Endothelial cell of umbilical vein (primary cell): ENCODE measurements at regions of chr4 and their contacts with region 1.

Region 1: DNA sequence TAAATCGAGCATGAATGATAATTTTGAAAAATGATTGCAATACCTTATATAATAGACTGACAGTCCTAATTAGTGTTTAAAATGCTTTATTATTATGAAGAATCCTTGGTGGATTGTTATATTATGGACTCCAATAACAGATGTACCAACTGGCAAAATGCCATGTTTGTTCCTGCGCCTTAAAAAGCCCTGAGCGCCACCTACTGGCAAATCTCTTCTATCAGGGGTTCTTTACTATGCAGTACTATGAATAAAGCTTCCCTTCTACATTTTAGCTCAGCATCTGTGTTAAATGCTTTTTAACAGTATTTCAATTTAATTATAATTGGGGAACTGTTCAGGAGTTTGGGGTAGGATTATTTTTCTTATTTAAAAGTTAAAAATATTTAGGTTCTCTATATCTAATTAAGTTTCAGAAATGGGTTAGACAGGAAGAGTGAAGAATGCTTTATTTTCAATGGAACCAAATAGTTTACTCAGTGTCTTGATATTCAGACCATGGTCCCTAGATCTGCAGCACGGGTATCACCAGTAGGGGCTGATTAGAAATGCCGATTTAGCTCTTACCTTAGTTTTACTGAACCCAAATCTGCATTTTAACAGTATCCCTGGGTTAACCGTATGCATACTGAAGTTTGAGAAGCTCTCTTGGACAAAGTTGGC is 20.1 kb downstream of the CFAP97 start:
- DNase-seq: peak; percentile 82
- H3K4me3 ChIP-seq: no peak overlapping the region
- H3K27ac ChIP-seq: no peak overlapping the region
- H3K4me1 ChIP-seq: no peaks in the 10 kb centered on the region
- H3K27me3 ChIP-seq: no peaks in the 10 kb centered on the region
- CTCF ChIP-seq: peak; percentile 71 to 80
- POLR2A ChIP-seq: no peak

Region 2: GRCh38 chr4:185005216-185005819 is 178.4 kb before region 1 on chr4:
- CTCF ChIA-PET with region 1: interaction called, 11 read pairs
- POLR2A ChIA-PET with region 1: no interaction called
- dilution Hi-C with region 1: no loop called
- intact Hi-C with region 1: loop called (anchors 1 kb)
- DNase-seq: peak; percentile 68
- H3K4me3 ChIP-seq: no peak overlapping the region
- H3K27ac ChIP-seq: no peak overlapping the region
- H3K4me1 ChIP-seq: no peaks in the 10 kb centered on the region
- H3K27me3 ChIP-seq: peaks cover 0 to 8% of the 10 kb centered on the region in 2 experiments
- CTCF ChIP-seq: peak; percentile 94 to 96
- POLR2A ChIP-seq: no peak

Region 3: GRCh38 chr4:185134307-185134869 is 49.4 kb before region 1 on chr4:
- CTCF ChIA-PET with region 1: interaction called, 33 read pairs
- POLR2A ChIA-PET with region 1: no interaction called
- dilution Hi-C with region 1: no loop called
- intact Hi-C with region 1: loop called (anchors 2 kb)
- DNase-seq: peak; percentile 56
- H3K4me3 ChIP-seq: no peak overlapping the region
- H3K27ac ChIP-seq: no peak overlapping the region
- H3K4me1 ChIP-seq: peaks cover 4% of the 10 kb centered on the region
- H3K27me3 ChIP-seq: no peaks in the 10 kb centered on the region
- CTCF ChIP-seq: peak; percentile 32 to 53
- POLR2A ChIP-seq: no peak

Region 4: DNA sequence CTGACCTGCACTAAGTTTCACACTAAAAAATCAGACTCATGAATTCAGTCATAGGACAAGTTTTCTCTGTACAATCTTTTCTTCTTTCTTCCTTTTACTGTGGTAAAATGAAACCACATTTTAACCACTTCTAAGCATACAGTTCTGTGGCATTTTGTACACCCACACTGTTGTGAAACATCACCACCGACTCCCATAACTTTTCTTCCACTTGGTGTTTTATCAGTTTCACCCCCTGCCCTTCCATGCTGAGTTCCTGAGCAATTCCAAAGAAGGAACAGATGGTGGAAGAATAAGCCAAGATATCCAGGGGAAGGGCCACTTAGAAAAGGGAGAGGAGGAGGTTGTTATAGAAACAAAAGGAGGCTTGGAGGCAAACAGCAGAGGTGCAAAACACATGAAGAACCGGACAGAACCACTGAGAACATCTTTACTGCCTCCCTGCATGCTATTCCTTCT is 18.1 kb before region 1 on chr4:
- CTCF ChIA-PET with region 1: interaction called, 10 read pairs
- POLR2A ChIA-PET with region 1: no interaction called
- dilution Hi-C with region 1: no loop called
- intact Hi-C with region 1: no loop called
- DNase-seq: peak; percentile 38
- H3K4me3 ChIP-seq: no peak overlapping the region
- H3K27ac ChIP-seq: no peak overlapping the region
- H3K4me1 ChIP-seq: no peaks in the 10 kb centered on the region
- H3K27me3 ChIP-seq: no peaks in the 10 kb centered on the region
- CTCF ChIP-seq: no peak
- POLR2A ChIP-seq: no peak

Region 5: DNA sequence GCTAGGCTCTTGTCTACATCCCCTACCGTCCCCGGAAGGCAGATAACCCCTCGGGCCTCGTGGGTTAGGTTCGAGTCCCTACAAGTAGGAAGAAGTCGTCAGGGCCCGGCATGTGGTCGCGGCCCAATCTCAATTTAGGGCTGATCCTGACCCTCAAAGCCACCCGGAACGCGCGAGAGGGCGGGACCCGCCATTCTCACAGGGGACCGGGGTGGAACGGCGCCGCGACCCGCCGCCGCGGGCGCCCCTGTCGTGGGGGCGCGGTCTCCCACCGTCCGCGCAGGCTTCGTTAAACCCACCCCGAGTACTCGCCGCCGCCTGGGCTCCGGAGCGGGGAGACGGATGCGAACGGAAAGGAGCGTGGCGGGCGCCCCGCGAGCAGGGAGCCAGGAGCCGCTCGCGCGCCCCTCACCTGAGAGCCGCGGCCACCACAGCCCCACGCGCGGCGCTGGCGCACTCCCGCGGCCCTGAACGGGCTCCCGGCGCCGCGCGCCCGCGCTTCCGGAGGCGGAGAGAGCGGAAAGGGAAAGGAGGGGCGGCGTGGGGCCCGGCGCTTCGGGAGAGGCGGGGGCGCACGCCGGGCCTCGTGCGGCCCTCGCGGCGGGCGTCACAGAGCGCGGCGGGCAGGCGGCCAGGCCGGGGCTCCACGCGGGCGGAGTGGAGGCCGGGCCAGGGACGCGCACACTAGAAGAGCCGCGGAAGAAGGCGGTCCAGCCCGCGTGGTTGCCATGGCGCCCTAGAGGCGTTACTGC is 19.9 kb after region 1 on chr4 and contains the start of gene CFAP97:
- CTCF ChIA-PET with region 1: interaction called, 74 read pairs
- POLR2A ChIA-PET with region 1: no interaction called
- dilution Hi-C with region 1: no loop called
- intact Hi-C with region 1: no loop called
- DNase-seq: peak; percentile 90
- H3K4me3 ChIP-seq: peak within 1 kb of the TSS; percentile 60 to 89 (median 64)
- H3K27ac ChIP-seq: peak within 1 kb of the TSS; percentile 79
- H3K4me1 ChIP-seq: peaks cover 34% of the 10 kb centered on the region
- H3K27me3 ChIP-seq: no peaks in the 10 kb centered on the region
- CTCF ChIP-seq: no peak
- POLR2A ChIP-seq: peak; percentile 43
- total RNA-seq, gene CFAP97: 17.6 and 22.4 TPM in 2 replicates